Posterior cingulate gyrus (tissue), 11 donors: ENCODE measurements at regions of chr1 and their contacts with region 1.

Region 1: GRCh38 chr1:48572646-48573261 is 100.8 kb upstream of the SPATA6 start:
- DNase-seq: peak; percentile 64 to 98 (median 82)

Region 2: DNA sequence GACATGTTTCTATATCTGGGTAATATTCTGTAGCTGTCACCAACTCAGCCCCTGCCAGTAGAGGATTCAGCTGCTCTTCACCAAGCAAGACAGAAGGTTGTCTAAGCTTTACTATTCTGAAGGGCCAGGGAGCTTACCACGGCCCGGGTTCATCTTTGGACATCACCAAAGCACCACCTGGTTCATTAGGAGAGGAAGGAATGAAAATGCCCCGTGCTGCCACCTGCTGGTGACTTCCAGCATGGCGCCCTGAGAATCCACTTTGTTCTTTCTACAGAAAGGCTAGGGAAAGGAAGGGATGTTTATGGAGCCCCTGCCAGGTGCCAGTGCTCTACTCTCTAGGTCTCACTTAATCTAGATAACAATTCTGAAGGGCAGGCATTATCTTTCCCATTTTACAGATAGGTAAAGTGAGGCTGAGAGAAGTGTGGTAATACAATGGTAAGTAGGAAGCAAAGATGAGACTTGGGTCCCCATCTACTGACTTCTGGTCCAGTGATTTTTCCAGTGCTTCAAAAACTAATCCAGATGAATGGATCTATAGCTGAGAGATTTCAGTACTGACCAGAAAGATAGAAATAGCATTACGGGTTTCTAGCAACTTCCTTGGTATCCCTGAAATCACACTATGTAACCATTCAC is 124.4 kb after region 1 on chr1:
- intact Hi-C with region 1: loop called (anchors 2 kb)
- DNase-seq: peak; percentile 33 to 94 (median 78)

Region 3: GRCh38 chr1:48776393-48777218 is 203.9 kb after region 1 on chr1 and contains the start of gene BEND5:
- intact Hi-C with region 1: no loop called
- DNase-seq: peak; percentile 50 to 94 (median 64)

Region 4: DNA sequence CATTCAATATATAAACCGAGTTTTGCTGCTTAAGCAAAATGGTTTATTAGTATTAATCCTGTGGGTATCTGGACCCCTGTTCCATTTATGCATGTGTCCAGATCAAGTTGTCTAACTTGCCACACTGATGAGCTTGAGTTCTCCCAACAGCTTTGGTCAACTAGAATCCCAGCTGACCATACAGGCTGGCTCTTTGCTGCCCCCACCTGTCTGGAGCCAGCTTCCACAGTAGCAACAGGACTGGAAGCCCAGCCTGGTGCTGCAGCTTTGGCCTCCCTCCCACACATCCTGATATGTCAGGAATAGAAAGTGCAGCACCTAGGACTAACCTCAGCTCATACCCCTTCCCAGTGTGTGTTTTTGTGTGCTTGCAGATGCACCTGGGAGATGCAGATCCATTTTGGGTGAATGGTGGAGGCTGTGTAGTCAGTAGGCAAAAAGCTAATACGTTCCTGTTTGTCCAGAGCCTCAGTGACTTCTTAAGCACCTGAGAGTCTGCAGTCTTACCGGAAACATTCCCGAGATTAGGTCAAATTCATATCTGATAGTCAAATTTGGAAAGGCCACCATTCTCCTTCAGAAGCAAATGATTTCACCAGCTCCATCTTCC is 244.9 kb after region 1 on chr1:
- intact Hi-C with region 1: loop called (anchors 1 kb)
- DNase-seq: peak; percentile 14 to 90 (median 62)

Region 5: GRCh38 chr1:48916130-48917069 is 343.6 kb after region 1 on chr1:
- intact Hi-C with region 1: loop called (anchors 10 kb)
- DNase-seq: peak in 2 of 10 donors; percentile 8 to 83